Lower leg skin (tissue), 4 donors: ENCODE measurements at regions of chrX and their contacts with region 1.

Region 1: DNA sequence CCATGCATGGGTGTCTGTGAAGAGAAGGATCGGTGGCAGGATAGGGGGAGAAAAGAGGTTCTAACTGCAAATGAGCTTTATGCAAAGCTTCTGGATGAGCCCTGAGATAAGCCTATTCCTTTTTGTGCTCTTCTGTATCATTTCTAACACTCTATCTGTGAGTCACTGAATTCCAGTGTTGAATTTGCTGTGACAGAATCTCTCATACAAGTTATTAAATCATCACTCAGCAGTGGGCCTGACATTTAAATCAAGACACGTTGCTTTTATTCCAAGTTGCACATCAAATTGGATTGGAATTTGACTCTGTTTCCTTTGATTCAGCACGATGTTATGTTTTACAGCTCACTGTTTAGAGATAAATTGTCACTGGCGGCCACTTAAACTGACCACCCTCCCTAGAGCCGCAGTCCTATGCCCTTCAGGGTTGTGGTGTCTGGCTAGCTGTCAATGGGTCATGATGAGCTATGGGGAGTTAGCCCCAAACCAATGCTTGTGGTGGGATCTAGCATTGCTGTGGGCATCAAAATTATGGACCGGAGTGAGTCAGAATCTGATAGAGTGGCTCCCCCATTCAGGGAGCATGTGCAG is 42.7 kb downstream of the LHFPL1 start:
- DNase-seq: no peak
- H3K4me3 ChIP-seq: no peak overlapping the region
- CTCF ChIP-seq: no peak
- POLR2A ChIP-seq: no peak

Region 2: DNA sequence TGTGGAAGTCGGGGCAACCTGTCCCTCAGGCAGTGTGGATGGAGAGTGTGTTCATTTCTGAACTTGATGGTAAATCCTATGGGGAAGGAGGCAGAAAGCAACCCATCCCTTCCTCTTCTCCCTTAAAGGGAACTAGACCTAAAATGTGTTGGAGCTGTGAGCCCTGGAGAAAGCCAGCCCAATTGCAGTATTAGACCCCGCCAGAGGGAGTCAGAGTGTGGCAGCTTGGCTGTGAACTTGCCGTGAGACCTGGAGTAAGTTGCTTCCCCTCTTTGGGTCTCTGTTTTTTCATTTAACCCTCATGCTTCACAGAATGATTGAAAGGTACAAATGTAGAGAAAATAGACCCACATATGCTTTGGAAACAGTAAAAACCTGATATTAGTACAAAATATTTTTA is 1649.8 kb before region 1 on chrX:
- intact Hi-C with region 1: no loop called
- DNase-seq: no peak
- H3K4me3 ChIP-seq: no peak overlapping the region
- CTCF ChIP-seq: no peak
- POLR2A ChIP-seq: no peak

Region 3: DNA sequence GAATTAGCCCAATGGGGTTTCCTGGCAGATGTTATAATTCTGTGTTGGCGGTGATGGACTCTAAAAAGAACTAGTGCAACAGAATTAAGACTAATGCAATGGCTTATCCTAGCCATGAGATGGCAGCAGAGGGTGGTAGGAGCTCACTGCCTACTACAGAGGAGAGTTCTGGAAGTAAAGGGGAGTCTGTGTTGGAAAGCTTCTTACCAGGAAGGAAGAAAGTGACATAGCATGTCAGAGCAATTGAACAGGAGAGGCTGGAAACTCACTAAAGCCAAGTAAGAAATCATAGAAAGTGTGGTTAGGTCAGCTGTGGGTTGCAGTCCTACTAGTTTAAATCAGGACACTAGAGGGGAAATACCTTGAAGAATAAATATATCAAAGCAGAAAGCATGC is 767.4 kb before region 1 on chrX:
- intact Hi-C with region 1: loop called (anchors 10 kb)
- DNase-seq: no peak
- H3K4me3 ChIP-seq: no peak overlapping the region
- CTCF ChIP-seq: no peak
- POLR2A ChIP-seq: no peak